A673 (cell line): ENCODE measurements at regions of chr3 and their contacts with region 1.

Region 1: DNA sequence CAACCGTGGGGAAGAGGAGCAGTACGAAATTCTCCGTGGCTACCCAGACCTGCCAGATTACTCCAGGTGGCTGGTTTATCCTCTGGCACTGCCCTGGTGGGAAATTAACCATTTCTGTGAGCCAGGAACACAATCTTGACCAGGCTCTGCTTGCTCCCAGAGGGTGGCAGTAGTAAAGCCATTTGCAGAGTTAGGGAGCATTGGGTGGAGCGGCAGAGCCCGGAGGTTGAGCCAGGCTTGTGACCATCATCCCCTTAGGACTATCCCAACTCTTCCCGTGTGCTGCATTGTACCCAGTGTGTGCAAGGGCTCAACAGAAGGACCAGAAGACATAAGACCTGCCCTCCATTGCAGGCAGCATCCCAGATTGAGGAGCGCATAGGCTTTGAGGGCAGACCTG is 5.3 kb downstream of the KNG1 start:
- DNase-seq: peak; percentile 6
- H3K4me3 ChIP-seq: no peak overlapping the region
- H3K27ac ChIP-seq: no peak overlapping the region
- H3K4me1 ChIP-seq: no peaks in the 10 kb centered on the region
- H3K27me3 ChIP-seq: no peaks in the 10 kb centered on the region
- CTCF ChIP-seq: peak; percentile 29; the same call in 1 of the 2 replicates

Region 2: DNA sequence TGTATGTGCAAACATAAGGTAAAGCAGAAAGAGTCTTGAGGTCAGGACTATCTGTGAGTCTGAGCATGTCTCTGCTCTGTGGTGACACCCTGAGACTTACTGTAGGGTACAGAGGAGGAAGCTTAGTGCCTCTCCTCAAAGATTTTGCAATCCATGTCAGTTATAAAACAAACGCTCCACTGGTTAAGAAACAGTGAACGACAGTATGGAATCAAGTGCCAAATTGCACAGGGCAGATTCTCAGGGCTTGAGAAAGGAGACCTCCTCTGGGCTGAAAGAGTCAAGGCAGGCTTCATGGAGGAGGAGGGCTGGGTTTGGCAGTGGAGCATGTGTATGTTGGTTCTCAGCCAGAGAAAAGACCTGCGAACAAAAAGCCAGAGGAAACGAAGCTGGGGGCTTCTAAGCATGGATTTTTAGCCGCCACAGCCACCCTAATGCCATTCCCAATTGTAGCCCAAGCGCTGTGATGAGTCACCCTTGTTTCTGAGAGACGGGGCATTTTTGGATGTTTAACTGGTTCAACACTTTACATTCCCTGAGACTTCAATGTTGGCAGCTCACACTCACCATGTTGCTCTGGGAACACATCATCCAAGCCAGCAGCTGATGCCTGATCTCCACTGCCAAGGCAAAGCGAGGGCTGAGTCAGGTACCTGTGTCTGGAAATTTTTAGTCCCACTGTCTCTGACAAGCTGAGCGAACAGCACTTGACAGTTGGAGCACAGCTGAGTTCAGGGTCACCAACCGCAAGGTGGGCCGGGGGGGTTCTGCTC is 357.1 kb before region 1 on chr3:
- CTCF ChIA-PET with region 1: no interaction called
- POLR2A ChIA-PET with region 1: no interaction called
- intact Hi-C with region 1: no loop called
- DNase-seq: no peak
- H3K4me3 ChIP-seq: no peak overlapping the region
- H3K27ac ChIP-seq: no peak overlapping the region
- H3K4me1 ChIP-seq: peaks cover 12% of the 10 kb centered on the region
- H3K27me3 ChIP-seq: peaks cover 89% of the 10 kb centered on the region
- CTCF ChIP-seq: no peak

Region 3: DNA sequence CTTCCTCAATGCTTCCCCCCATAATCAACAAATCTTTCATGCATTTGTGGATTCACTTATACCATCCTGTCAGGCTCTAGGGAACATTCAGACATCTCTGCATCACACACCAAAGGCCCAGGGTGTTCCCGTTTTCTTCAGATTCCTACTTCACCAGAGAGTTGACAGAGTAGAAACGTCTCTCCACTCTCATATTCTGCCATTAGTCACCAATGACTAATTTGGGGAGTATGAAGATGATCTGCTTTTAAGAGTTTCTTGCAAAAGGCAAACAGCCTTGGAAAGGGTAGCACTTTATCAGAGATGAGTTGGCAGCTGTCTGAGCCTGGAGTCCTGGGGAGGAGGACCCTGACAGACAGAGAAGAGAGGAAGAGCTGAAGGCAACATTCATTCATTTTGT is 304.7 kb before region 1 on chr3:
- CTCF ChIA-PET with region 1: no interaction called
- POLR2A ChIA-PET with region 1: no interaction called
- intact Hi-C with region 1: no loop called
- DNase-seq: peak; percentile 19
- H3K4me3 ChIP-seq: no peak overlapping the region
- H3K27ac ChIP-seq: no peak overlapping the region
- H3K4me1 ChIP-seq: peaks cover 20% of the 10 kb centered on the region
- H3K27me3 ChIP-seq: no peaks in the 10 kb centered on the region
- CTCF ChIP-seq: no peak

Region 4: DNA sequence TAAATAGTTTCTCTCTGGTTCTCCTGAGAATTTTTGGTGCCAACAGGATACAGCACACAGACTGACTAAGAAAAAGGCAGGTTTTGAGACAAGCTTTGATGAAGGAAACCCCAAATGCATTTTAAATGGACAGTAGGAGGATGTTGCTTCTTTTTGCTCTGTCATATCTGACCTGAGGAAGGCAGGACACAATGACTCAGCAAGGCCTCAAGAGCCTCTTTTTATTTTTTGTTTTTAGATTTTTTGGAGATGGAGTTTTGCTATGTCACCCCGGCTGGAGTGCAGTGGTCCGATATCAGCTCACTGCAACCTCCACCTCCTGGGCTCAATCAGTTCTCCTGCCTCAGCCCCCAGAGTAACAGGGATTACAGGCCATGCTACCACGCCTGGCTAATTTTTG is 22.2 kb before region 1 on chr3:
- CTCF ChIA-PET with region 1: no interaction called
- POLR2A ChIA-PET with region 1: no interaction called
- intact Hi-C with region 1: loop called (anchors 1 kb)
- DNase-seq: no peak
- H3K4me3 ChIP-seq: no peak overlapping the region
- H3K27ac ChIP-seq: no peak overlapping the region
- H3K4me1 ChIP-seq: no peaks in the 10 kb centered on the region
- H3K27me3 ChIP-seq: no peaks in the 10 kb centered on the region
- CTCF ChIP-seq: no peak

Region 5: GRCh38 chr3:186849374-186849975 is 127.0 kb after region 1 on chr3:
- CTCF ChIA-PET with region 1: no interaction called
- POLR2A ChIA-PET with region 1: no interaction called
- intact Hi-C with region 1: no loop called
- DNase-seq: peak; percentile 67
- H3K4me3 ChIP-seq: no peak overlapping the region
- H3K27ac ChIP-seq: no peak overlapping the region
- H3K4me1 ChIP-seq: peaks cover 22% of the 10 kb centered on the region
- H3K27me3 ChIP-seq: no peaks in the 10 kb centered on the region
- CTCF ChIP-seq: peak; percentile 71